K562 (cell line): ENCODE measurements at regions of chr19 and their contacts with region 1.

Region 1: GRCh38 chr19:29844891-29845572 is 33.2 kb downstream of the CCNE1 start:
- DNase-seq: peak in 3 of 4 experiments; percentile 92 to 93 (median 92)
- ATAC-seq: peak; percentile 92
- H3K4me3 ChIP-seq: peak overlapping the region; percentile 73
- H3K27ac ChIP-seq: peak overlapping the region; percentile 48; the same call in 2 of the 3 replicates
- H3K4me1 ChIP-seq: peaks cover 0 to 24% of the 10 kb centered on the region in 2 experiments; a peak in 4 of 5 replicates
- H3K27me3 ChIP-seq: peaks cover 26 to 46% of the 10 kb centered on the region in 2 experiments
- CTCF ChIP-seq: no peak
- EP300 ChIP-seq: no peak
- POLR2A ChIP-seq: peak; percentile 58; the same call in 1 of the 2 replicates
- RAD21 ChIP-seq: no peak; a peak in 1 of 4 replicates

Region 2: GRCh38 chr19:29812881-29813275 is 32.2 kb before region 1 on chr19:
- CTCF ChIA-PET with region 1: no interaction called
- POLR2A ChIA-PET with region 1: no interaction called
- in situ Hi-C with region 1: no loop called
- intact Hi-C with region 1: loop called (anchors 1 kb)
- DNase-seq: no peak
- ATAC-seq: no peak
- H3K4me3 ChIP-seq: peak overlapping the region; percentile 55; the same call in 1 of the 2 replicates
- H3K27ac ChIP-seq: no peak overlapping the region; the same call in 2 of the 3 replicates
- H3K4me1 ChIP-seq: peaks cover 20 to 21% of the 10 kb centered on the region in 2 experiments; a peak in 4 of 5 replicates
- H3K27me3 ChIP-seq: no peaks in the 10 kb centered on the region
- CTCF ChIP-seq: no peak
- EP300 ChIP-seq: no peak
- POLR2A ChIP-seq: no peak
- RAD21 ChIP-seq: no peak

Region 3: GRCh38 chr19:30084390-30084819 is 239.4 kb after region 1 on chr19:
- CTCF ChIA-PET with region 1: no interaction called
- POLR2A ChIA-PET with region 1: no interaction called
- in situ Hi-C with region 1: no loop called
- intact Hi-C with region 1: no loop called
- DNase-seq: no peak
- ATAC-seq: no peak
- H3K4me3 ChIP-seq: no peak overlapping the region
- H3K27ac ChIP-seq: no peak overlapping the region
- H3K4me1 ChIP-seq: no peaks in the 10 kb centered on the region
- H3K27me3 ChIP-seq: peaks cover 30 to 68% of the 10 kb centered on the region in 2 experiments; a peak in 4 of 5 replicates
- CTCF ChIP-seq: no peak
- EP300 ChIP-seq: no peak
- POLR2A ChIP-seq: no peak
- RAD21 ChIP-seq: no peak